ENCODE measurements at regions of chr7 and their contacts with region 1.

Region 1: DNA sequence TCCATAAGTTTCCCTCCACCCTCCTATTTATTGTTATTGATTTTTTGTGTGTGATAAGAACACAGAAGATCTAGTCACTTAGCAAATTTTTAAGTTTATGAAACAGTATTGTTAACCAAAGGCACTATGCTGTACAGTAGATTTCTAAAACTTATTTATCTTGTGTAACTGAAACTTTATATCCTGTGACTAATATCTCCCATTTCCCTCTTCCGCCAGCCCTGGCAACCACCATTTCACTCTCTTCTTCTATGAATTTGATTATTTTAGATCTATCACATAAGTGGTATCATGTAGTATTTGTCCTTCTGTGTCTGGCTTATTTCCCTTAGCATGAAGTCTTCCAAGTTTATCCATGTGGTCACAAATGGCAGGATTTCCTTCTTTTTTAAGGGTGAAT is 144.3 kb upstream of the INHBA start:
- DNase-seq: no peak
- H3K4me3 Mint-ChIP-seq: no peak overlapping the region
- H3K27ac Mint-ChIP-seq: no peak overlapping the region
- H3K4me1 Mint-ChIP-seq: peaks cover 12% of the 10 kb centered on the region
- H3K27me3 Mint-ChIP-seq: peaks cover 6% of the 10 kb centered on the region

Region 2: DNA sequence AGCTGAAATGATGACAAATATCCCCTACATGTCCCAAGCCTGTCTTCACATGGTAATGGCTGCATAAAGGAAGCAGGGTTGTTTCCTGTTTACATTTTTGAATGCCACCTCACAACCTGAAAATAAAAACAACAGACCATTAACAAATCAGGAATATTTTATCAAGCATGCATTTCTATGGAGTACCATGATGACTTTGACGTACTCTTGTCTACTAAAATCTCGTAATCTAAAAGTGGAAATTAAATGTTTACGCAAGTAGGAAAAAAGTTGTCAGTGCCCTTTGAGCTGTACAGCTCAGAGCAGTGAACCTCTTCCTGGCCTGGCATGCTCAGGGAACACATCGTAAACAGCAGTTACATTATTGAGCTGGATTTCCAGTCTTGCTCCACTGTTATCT is 338.4 kb before region 1 on chr7:
- CTCF ChIA-PET with region 1: no interaction called
- intact Hi-C with region 1: loop called (anchors 5 kb)
- DNase-seq: no peak
- H3K4me3 Mint-ChIP-seq: no peak overlapping the region
- H3K27ac Mint-ChIP-seq: no peak overlapping the region
- H3K4me1 Mint-ChIP-seq: no peaks in the 10 kb centered on the region
- H3K27me3 Mint-ChIP-seq: peaks cover 2% of the 10 kb centered on the region

Measured in activated naive CD4-positive, alpha-beta T cell treated with anti-CD3 and anti-CD28 coated beads for 36 hours (primary cell).